Esophagus muscularis mucosa (tissue), 4 donors: ENCODE measurements at regions of chr1 and their contacts with region 1.

Region 1: DNA sequence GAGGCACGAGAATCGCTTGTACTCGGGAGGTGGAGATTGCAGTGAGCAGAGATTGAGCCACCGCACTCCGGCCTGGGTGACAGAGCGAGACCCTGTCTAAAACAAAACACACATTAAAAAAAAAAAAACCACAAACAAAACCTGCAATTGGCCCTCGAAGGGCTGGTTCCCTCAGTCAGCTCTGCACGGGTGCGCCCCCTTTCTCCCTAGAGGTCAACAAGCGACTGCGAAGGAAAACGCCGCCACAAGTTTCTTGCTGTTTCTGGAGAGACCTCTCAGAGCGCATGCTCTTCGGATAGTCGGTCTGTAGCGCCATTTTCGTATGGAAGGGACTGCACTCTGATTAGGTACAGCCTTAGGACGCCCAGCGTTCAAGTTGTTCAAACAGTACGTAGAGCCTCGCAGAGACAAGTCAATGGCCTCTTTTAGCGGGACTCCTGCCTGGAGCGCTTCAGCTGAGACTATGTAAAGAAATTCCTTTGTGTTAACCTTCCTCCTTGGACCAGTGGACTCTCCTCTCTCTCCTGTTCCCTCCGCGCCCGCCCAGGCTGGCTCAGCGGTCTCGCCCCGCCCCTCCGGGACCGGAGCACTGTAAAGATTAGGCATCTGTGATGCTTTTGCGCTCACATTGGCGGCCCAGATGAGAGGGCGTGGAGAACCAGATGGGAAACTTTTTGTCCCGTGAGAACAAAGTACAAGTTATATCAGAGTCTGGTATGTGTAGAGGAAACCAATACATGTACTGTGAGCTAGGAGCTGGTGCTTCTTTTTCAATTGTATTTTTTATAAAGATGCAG is 1.0 kb upstream of the CDC14A start:
- DNase-seq: peak; percentile 95
- H3K4me3 ChIP-seq: peak overlapping the region; percentile 78 to 95 (median 80)
- H3K27ac ChIP-seq: peak overlapping the region; percentile 88 to 91 (median 89)
- H3K4me1 ChIP-seq: peaks cover 22 to 38% (median 31%) of the 10 kb centered on the region in 4 donors
- H3K27me3 ChIP-seq: no peaks in the 10 kb centered on the region
- CTCF ChIP-seq: peak; percentile 24 to 26 (median 25)
- EP300 ChIP-seq: no peak
- POLR2A ChIP-seq: no peak

Region 2: GRCh38 chr1:100249537-100250257 is 101.6 kb before region 1 on chr1 and contains the start of gene DBT:
- intact Hi-C with region 1: loop called (anchors 5 kb)
- DNase-seq: peak; percentile 99
- H3K4me3 ChIP-seq: peak within 1 kb of the TSS; percentile 62 to 89 (median 76)
- H3K27ac ChIP-seq: peak within 1 kb of the TSS; percentile 80 to 95 (median 89)
- H3K4me1 ChIP-seq: peaks cover 9 to 27% (median 25%) of the 10 kb centered on the region in 4 donors
- H3K27me3 ChIP-seq: no peaks in the 10 kb centered on the region
- CTCF ChIP-seq: no peak
- EP300 ChIP-seq: no peak
- POLR2A ChIP-seq: no peak
- total RNA-seq, gene DBT: 9.1 to 14.2 (median 12.6) TPM

Region 3: DNA sequence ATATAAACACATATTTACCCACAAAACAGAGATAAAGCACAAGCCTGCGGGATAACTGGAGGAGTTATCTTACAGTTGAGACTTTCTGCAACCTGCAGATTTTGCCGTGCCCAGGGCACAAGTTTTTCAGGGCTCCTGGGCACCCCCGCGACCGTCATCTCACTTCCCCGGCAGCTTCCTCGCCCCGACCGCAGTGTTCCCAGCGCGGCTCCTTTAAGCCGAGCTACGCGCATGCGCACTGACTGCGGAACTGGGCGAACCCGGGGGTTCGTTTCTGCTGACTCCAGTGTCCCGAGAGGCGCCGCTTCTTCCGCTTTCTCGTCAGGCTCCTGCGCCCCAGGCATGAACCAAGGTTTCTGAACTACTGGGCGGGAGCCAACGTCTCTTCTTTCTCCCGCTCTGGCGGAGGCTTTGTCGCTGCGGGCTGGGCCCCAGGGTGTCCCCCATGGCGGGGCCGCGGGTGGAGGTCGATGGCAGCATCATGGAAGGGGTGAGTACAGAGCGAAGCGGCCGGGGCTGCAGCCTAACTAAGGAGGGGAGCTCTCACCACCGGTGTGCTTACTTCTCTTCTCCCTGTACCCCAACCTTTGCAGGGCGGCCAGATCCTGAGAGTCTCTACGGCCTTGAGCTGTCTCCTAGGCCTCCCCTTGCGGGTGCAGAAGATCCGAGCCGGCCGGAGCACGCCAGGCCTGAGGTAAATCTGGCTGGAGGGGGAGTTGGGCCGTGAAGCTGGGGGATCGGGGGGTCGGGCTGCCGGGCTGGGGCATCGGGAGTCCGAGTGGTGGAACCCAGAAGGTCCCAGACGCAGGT is 85.2 kb before region 1 on chr1 and contains the start of gene RTCA:
- intact Hi-C with region 1: loop called (anchors 5 kb)
- DNase-seq: peak; percentile 98
- H3K4me3 ChIP-seq: peak within 1 kb of the TSS; percentile 81 to 93 (median 85)
- H3K27ac ChIP-seq: peak within 1 kb of the TSS; percentile 79 to 91 (median 82)
- H3K4me1 ChIP-seq: peaks cover 11 to 44% (median 37%) of the 10 kb centered on the region in 4 donors
- H3K27me3 ChIP-seq: no peaks in the 10 kb centered on the region
- CTCF ChIP-seq: peak in 1 of 3 experiments; percentile 9
- EP300 ChIP-seq: no peak
- POLR2A ChIP-seq: no peak
- total RNA-seq, gene RTCA: 18.7 to 22.0 (median 21.4) TPM